ENCODE measurements at regions of chr15 and their contacts with region 1.

Region 1: GRCh38 chr15:78822514-78822913 is 11.2 kb upstream of the ADAMTS7 start:
- DNase-seq: no peak
- ATAC-seq: no peak
- H3K4me3 Mint-ChIP-seq: no peak overlapping the region
- H3K27ac Mint-ChIP-seq: no peak overlapping the region
- H3K4me1 Mint-ChIP-seq: no peaks in the 10 kb centered on the region
- H3K27me3 Mint-ChIP-seq: peaks cover 5% of the 10 kb centered on the region

Region 2: DNA sequence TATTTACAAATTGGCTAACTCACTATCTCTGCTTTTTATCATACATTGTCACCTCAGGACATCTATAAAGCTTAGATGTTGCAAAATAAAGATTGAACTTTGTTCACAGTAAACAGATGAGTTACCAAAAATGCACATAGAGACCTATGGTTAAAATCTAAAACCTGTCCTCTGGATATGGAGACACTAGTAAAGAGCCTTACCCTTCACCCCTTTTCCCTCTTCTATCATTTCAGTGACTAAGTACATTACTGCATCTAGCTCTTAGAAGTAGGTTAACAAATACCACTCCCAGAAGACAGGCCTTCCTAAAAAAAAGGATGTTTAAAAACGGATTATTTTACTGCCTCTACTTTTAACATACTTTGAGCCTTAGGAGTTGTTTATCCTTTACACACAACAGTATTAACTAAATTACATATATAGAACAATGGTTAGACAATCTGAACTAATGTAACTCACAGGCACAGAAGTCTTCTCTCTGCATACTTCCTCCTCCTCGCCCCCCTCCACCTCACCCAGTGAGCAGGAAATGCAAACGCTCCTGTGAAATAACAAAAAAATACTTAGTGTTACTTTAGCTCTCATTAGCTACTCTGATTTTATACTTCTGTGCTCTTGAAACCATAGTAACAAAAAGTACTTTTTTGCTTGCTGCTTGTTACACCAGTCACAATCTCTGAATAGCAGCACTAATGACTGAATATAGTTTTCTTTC is 361.2 kb before region 1 on chr15:
- CTCF ChIA-PET with region 1: no interaction called
- POLR2A ChIA-PET with region 1: no interaction called
- intact Hi-C with region 1: no loop called
- DNase-seq: no peak
- ATAC-seq: peak; percentile 57
- H3K4me3 Mint-ChIP-seq: no peak overlapping the region
- H3K27ac Mint-ChIP-seq: peak overlapping the region; percentile 64
- H3K4me1 Mint-ChIP-seq: peaks cover 42% of the 10 kb centered on the region
- H3K27me3 Mint-ChIP-seq: no peaks in the 10 kb centered on the region

Region 3: GRCh38 chr15:78808550-78808949 is 14.0 kb before region 1 on chr15:
- CTCF ChIA-PET with region 1: interaction called, 8 read pairs
- POLR2A ChIA-PET with region 1: interaction called, 10 read pairs
- intact Hi-C with region 1: no loop called
- DNase-seq: peak; percentile 54
- ATAC-seq: peak; percentile 72
- H3K4me3 Mint-ChIP-seq: no peak overlapping the region
- H3K27ac Mint-ChIP-seq: no peak overlapping the region
- H3K4me1 Mint-ChIP-seq: peaks cover 11% of the 10 kb centered on the region
- H3K27me3 Mint-ChIP-seq: peaks cover 32% of the 10 kb centered on the region